Naive thymus-derived CD4-positive, alpha-beta T cell (primary cell): ENCODE measurements at regions of chr1 and their contacts with region 1.

Region 1: GRCh38 chr1:42035830-42036604 is 117.2 kb upstream of the GUCA2B start:
- DNase-seq: peak; percentile 92 to 100 (median 96)
- ATAC-seq: peak; percentile 98
- H3K4me3 ChIP-seq: peak overlapping the region; percentile 72
- H3K4me3 Mint-ChIP-seq: peak overlapping the region in 9 of 10 donors; percentile 74 to 88 (median 84)
- H3K27ac ChIP-seq: peak overlapping the region; percentile 74
- H3K27ac Mint-ChIP-seq: peak overlapping the region in 5 of 9 donors; percentile 37 to 82 (median 65)
- H3K4me1 ChIP-seq: peaks cover 25 to 43% of the 10 kb centered on the region in 2 donors
- H3K4me1 Mint-ChIP-seq: peaks cover 23 to 45% (median 39%) of the 10 kb centered on the region in 7 donors
- H3K27me3 ChIP-seq: no peaks in the 10 kb centered on the region
- H3K27me3 Mint-ChIP-seq: peaks cover 0 to 20% (median 0%) of the 10 kb centered on the region in 5 donors

Region 2: GRCh38 chr1:41662061-41662764 is 373.8 kb before region 1 on chr1:
- CTCF ChIA-PET with region 1: no interaction called
- POLR2A ChIA-PET with region 1: no interaction called
- intact Hi-C with region 1: loop called in 1 of 2 experiments (anchors 1 kb)
- DNase-seq: peak; percentile 47 to 82 (median 60)
- ATAC-seq: peak; percentile 88
- H3K4me3 ChIP-seq: peak overlapping the region; percentile 60
- H3K4me3 Mint-ChIP-seq: peak overlapping the region in 6 of 10 donors; percentile 13 to 93 (median 70)
- H3K27ac ChIP-seq: peak overlapping the region; percentile 61
- H3K27ac Mint-ChIP-seq: peak overlapping the region in 2 of 9 donors; percentile 56 to 84
- H3K4me1 ChIP-seq: peaks cover 25 to 51% of the 10 kb centered on the region in 2 donors
- H3K4me1 Mint-ChIP-seq: peaks cover 42 to 80% (median 66%) of the 10 kb centered on the region in 7 donors
- H3K27me3 ChIP-seq: no peaks in the 10 kb centered on the region
- H3K27me3 Mint-ChIP-seq: no peaks in the 10 kb centered on the region

Region 3: DNA sequence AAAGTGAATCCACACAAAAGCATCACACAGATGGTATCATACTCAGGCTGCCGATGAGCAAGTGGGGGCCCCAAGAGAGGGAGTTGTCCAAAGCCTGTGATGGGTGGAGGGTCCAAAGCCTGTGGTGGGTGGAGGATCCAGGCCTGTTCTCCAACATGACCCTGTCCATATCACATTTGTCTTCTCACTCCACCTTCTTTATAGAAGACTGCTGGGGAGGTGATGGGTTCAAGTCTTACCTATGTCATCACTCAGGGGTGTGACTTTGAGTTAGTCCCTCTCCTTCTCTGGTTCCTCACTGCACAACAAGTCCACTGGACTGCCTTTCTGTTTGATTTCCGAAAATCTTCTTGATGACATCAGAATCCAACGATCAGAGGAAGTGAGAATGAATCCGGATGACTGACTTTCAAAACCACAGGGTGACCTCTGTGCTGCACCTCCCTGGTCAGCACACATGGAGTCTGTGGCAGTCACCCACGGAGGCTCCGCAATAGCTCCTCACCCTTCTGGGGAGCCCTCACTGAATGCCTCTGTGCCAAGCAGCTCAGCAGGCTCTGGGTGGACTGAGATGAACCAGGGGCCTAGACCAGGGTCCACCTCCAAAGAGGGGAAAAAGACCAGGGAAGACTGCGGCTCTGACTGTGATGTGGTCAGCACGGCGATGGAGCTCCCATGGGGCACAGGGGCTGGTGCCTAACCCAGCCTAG is 284.1 kb before region 1 on chr1:
- CTCF ChIA-PET with region 1: no interaction called
- POLR2A ChIA-PET with region 1: no interaction called
- intact Hi-C with region 1: loop called in 1 of 2 experiments (anchors 1 kb)
- DNase-seq: no peak
- ATAC-seq: peak; percentile 80
- H3K4me3 ChIP-seq: no peak overlapping the region
- H3K4me3 Mint-ChIP-seq: peak overlapping the region in 6 of 10 donors; percentile 47 to 74 (median 65)
- H3K27ac ChIP-seq: no peak overlapping the region
- H3K27ac Mint-ChIP-seq: peak overlapping the region in 3 of 9 donors; percentile 14 to 84 (median 83)
- H3K4me1 ChIP-seq: peaks cover 31 to 37% of the 10 kb centered on the region in 2 donors
- H3K4me1 Mint-ChIP-seq: peaks cover 23 to 73% (median 46%) of the 10 kb centered on the region in 7 donors
- H3K27me3 ChIP-seq: no peaks in the 10 kb centered on the region
- H3K27me3 Mint-ChIP-seq: no peaks in the 10 kb centered on the region

Region 4: GRCh38 chr1:41891199-41891896 is 144.7 kb before region 1 on chr1:
- CTCF ChIA-PET with region 1: interaction called, 3 read pairs
- POLR2A ChIA-PET with region 1: interaction called, 8 read pairs
- intact Hi-C with region 1: loop called (anchors 1 to 2 kb)
- DNase-seq: peak; percentile 37 to 80 (median 75)
- ATAC-seq: peak; percentile 94
- H3K4me3 ChIP-seq: peak overlapping the region; percentile 60
- H3K4me3 Mint-ChIP-seq: peak overlapping the region; percentile 77 to 93 (median 84)
- H3K27ac ChIP-seq: peak overlapping the region; percentile 68
- H3K27ac Mint-ChIP-seq: peak overlapping the region; percentile 84 to 94 (median 92)
- H3K4me1 ChIP-seq: peaks cover 17 to 45% of the 10 kb centered on the region in 2 donors
- H3K4me1 Mint-ChIP-seq: peaks cover 23 to 64% (median 36%) of the 10 kb centered on the region in 7 donors
- H3K27me3 ChIP-seq: no peaks in the 10 kb centered on the region
- H3K27me3 Mint-ChIP-seq: peaks cover 0 to 2% (median 0%) of the 10 kb centered on the region in 5 donors

Region 5: GRCh38 chr1:42173155-42173933 is 137.3 kb after region 1 on chr1:
- CTCF ChIA-PET with region 1: no interaction called
- POLR2A ChIA-PET with region 1: no interaction called
- intact Hi-C with region 1: loop called in 1 of 2 experiments (anchors 5 kb)
- DNase-seq: peak; percentile 28 to 76 (median 57)
- ATAC-seq: peak; percentile 85
- H3K4me3 ChIP-seq: no peak overlapping the region
- H3K4me3 Mint-ChIP-seq: no peak overlapping the region
- H3K27ac ChIP-seq: no peak overlapping the region
- H3K27ac Mint-ChIP-seq: peak overlapping the region in 2 of 9 donors; percentile 17 to 71
- H3K4me1 ChIP-seq: no peaks in the 10 kb centered on the region
- H3K4me1 Mint-ChIP-seq: peaks cover 0 to 3% (median 0%) of the 10 kb centered on the region in 7 donors
- H3K27me3 ChIP-seq: no peaks in the 10 kb centered on the region
- H3K27me3 Mint-ChIP-seq: no peaks in the 10 kb centered on the region